ENCODE measurements at regions of chr3 and their contacts with region 1.

Region 1: GRCh38 chr3:48609088-48610005 is at the start of gene UQCRC1:
- DNase-seq: peak; percentile 95 to 98
- ATAC-seq: peak; percentile 100
- H3K4me3 ChIP-seq: peak within 1 kb of the TSS; percentile 80 to 93
- H3K27ac ChIP-seq: peak within 1 kb of the TSS in 1 of 2 donors; percentile 37
- H3K4me1 ChIP-seq: peaks cover 0 to 3% of the 10 kb centered on the region in 2 donors
- H3K27me3 ChIP-seq: no peaks in the 10 kb centered on the region
- total RNA-seq, gene UQCRC1: 95.6 to 143 TPM

Region 2: DNA sequence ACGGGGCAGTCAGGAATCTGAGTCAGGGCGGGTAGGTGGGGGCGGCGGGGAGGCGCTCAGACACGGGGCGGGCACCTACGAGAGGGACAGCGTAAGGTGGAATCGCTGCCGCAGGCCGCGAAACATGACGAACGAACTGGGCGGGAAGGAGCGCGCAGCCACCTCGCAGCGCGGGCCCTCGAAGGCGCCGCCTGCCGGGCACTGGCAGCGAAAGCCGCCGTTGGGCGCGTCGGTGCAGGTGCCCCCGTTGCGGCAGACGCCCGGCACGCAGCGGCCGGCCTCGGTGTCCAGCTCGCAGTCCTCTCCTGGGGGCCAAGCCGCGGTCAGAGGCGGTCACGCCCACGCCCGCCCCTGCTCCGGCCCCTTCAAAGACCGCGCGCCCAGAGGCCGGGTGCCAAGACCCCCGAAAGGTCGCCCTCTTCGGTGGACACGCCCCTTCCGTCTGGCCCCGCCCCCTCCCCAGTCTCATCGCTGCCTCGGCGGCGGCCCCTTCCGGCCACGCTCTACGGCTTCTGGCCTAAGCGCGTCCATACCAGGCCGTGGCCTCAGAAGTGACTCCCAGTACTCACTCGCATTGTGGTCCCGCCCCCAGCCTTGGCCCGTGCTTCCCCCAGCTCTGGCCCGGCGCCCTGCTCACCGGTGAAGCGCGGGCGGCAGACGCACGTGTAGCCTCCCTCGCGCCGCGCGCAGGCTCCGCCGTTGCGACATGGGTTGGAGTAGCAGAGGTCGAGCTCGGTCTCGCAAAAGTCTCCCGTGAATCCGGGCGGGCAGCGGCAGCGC is 46.9 kb after region 1 on chr3:
- intact Hi-C with region 1: loop called in 1 of 2 experiments (anchors 2 kb)
- DNase-seq: peak; percentile 91 to 95
- ATAC-seq: peak; percentile 88
- H3K4me3 ChIP-seq: peak overlapping the region; percentile 15 to 43
- H3K27ac ChIP-seq: peak overlapping the region in 1 of 2 donors; percentile 3
- H3K4me1 ChIP-seq: no peaks in the 10 kb centered on the region
- H3K27me3 ChIP-seq: no peaks in the 10 kb centered on the region

Measured in aorta (tissue), 5 donors.